MCF 10A (cell line): ENCODE measurements at regions of chr6 and their contacts with region 1.

Region 1: GRCh38 chr6:85756982-85757381 is 114.3 kb upstream of the SYNCRIP start:
- DNase-seq: peak; percentile 45
- H3K4me3 Mint-ChIP-seq: no peak overlapping the region
- H3K27ac Mint-ChIP-seq: no peak overlapping the region
- H3K4me1 Mint-ChIP-seq: no peaks in the 10 kb centered on the region
- H3K27me3 Mint-ChIP-seq: peaks cover 38% of the 10 kb centered on the region
- CTCF ChIP-seq: peak; percentile 48

Region 2: DNA sequence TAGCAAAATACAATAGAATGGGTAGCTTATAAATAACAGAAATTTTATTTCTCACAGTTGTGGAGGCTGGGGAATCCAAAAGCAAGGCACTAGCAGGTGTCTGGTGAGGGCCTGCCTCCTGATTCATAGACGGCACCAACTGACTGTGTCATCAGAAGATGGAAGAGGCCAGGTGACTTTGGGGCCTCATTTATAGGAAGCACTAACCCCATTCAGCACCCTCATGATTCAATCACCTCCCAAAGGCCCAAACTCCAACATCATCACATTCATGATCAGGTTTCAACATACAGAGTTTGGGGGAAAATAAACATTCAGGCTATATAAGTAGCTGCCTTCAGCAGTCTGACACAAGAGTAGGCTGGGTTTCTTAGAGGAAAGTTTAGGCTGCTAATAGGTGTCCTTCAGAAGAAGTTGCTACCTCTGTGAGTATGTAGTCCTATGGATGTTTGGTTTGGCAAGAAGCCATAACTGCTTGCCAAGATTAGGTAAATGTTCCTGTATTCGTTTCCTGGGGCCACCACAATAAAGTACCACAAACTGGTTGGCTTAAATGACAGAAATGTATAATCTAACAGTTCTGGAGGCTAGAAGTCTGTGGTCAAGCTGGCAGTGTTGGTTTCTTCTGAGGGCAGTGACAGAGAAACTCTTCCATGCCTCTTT is 258.3 kb before region 1 on chr6:
- CTCF ChIA-PET with region 1: no interaction called
- POLR2A ChIA-PET with region 1: no interaction called
- intact Hi-C with region 1: no loop called
- DNase-seq: peak; percentile 97
- H3K4me3 Mint-ChIP-seq: no peak overlapping the region
- H3K27ac Mint-ChIP-seq: no peak overlapping the region
- H3K4me1 Mint-ChIP-seq: peaks cover 32% of the 10 kb centered on the region
- H3K27me3 Mint-ChIP-seq: no peaks in the 10 kb centered on the region
- CTCF ChIP-seq: no peak

Region 3: GRCh38 chr6:86937219-86938079 is 1180.5 kb after region 1 on chr6 and contains the start of gene HTR1E:
- CTCF ChIA-PET with region 1: no interaction called
- POLR2A ChIA-PET with region 1: no interaction called
- intact Hi-C with region 1: loop called (anchors 2 kb)
- DNase-seq: peak; percentile 48
- H3K4me3 Mint-ChIP-seq: peak within 1 kb of the TSS; percentile 56
- H3K27ac Mint-ChIP-seq: no peak within 1 kb of the TSS
- H3K4me1 Mint-ChIP-seq: peaks cover 7% of the 10 kb centered on the region
- H3K27me3 Mint-ChIP-seq: peaks cover 67% of the 10 kb centered on the region
- CTCF ChIP-seq: peak; percentile 68
- total RNA-seq, gene HTR1E: not detected in 2 replicates

Region 4: DNA sequence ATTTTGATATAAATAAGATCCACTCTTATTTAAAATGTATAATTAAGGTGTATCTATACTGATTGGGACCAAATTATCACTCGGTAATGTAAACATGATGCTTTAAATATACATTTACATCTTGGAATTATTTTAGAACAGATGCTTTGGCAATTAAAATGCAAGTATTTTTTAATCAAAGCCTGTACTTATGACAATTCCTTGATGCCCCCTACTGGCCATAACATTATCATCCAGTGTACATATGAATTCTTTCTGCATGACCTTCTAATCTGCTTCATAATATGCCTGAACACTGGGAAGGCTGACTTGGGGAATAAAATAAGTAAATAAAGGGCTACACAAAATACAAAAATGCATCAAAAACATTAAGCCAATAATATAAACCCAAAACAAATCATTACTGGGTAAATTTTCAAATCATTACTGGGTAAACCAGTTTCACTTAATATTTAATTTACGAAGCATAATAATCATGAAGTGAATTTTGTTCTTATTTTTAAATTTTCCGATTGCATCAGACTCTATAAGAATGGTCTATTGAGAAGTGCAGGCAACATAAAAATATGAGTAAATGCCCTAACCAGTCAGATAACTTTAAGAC is 1272.8 kb after region 1 on chr6:
- CTCF ChIA-PET with region 1: interaction called, 3 read pairs
- POLR2A ChIA-PET with region 1: no interaction called
- intact Hi-C with region 1: loop called (anchors 5 kb)
- DNase-seq: peak; percentile 67
- H3K4me3 Mint-ChIP-seq: no peak overlapping the region
- H3K27ac Mint-ChIP-seq: no peak overlapping the region
- H3K4me1 Mint-ChIP-seq: no peaks in the 10 kb centered on the region
- H3K27me3 Mint-ChIP-seq: peaks cover 34% of the 10 kb centered on the region
- CTCF ChIP-seq: peak; percentile 51